Calu3 (cell line): ENCODE measurements at regions of chr1 and their contacts with region 1.

Region 1: GRCh38 chr1:113488576-113489177 is 98.4 kb downstream of the MAGI3 start:
- DNase-seq: peak; percentile 0
- H3K4me3 Mint-ChIP-seq: no peak overlapping the region
- H3K27ac Mint-ChIP-seq: no peak overlapping the region
- H3K4me1 Mint-ChIP-seq: no peaks in the 10 kb centered on the region
- H3K27me3 Mint-ChIP-seq: no peaks in the 10 kb centered on the region
- CTCF ChIP-seq: peak; percentile 14

Region 2: DNA sequence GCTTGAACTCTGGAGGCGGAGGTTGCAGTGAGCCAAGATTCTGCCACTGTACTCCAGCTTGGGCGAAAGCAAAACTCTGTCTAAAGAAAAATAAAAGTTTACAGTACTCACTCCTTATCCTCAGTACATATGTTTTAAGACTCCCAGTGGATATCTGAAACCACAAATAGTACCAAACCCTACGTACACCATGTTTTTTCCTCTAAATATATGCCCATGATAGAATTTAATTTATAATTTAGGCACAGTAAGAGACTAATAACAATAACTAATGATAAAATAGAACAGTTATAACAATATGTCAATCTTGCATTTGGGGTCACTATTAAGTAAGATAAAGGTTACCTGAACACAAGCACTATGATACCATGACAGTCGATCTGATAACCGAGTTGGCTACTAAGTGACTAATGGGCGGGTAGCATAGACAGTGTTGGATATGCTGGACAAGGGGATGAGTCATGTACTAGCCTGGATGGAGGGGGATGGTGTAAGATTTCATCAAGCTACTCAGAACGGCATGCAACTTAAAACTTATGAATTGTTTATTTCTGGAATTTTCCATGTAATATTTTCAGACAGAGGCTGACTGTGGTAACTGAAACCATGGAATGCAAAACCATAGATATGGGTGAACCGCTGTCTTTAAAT is 913.4 kb before region 1 on chr1:
- CTCF ChIA-PET with region 1: no interaction called
- intact Hi-C with region 1: no loop called
- DNase-seq: no peak
- H3K4me3 Mint-ChIP-seq: no peak overlapping the region
- H3K27ac Mint-ChIP-seq: no peak overlapping the region
- H3K4me1 Mint-ChIP-seq: no peaks in the 10 kb centered on the region
- H3K27me3 Mint-ChIP-seq: no peaks in the 10 kb centered on the region
- CTCF ChIP-seq: no peak

Region 3: GRCh38 chr1:113511269-113511668 is 22.6 kb after region 1 on chr1:
- CTCF ChIA-PET with region 1: no interaction called
- intact Hi-C with region 1: loop called (anchors 1 kb)
- DNase-seq: no peak
- H3K4me3 Mint-ChIP-seq: no peak overlapping the region
- H3K27ac Mint-ChIP-seq: no peak overlapping the region
- H3K4me1 Mint-ChIP-seq: peaks cover 24% of the 10 kb centered on the region
- H3K27me3 Mint-ChIP-seq: no peaks in the 10 kb centered on the region
- CTCF ChIP-seq: no peak

Region 4: GRCh38 chr1:113557177-113557576 is 68.5 kb after region 1 on chr1:
- CTCF ChIA-PET with region 1: no interaction called
- intact Hi-C with region 1: no loop called
- DNase-seq: no peak
- H3K4me3 Mint-ChIP-seq: no peak overlapping the region
- H3K27ac Mint-ChIP-seq: no peak overlapping the region
- H3K4me1 Mint-ChIP-seq: peaks cover under 1% of the 10 kb centered on the region
- H3K27me3 Mint-ChIP-seq: no peaks in the 10 kb centered on the region
- CTCF ChIP-seq: no peak

Region 5: DNA sequence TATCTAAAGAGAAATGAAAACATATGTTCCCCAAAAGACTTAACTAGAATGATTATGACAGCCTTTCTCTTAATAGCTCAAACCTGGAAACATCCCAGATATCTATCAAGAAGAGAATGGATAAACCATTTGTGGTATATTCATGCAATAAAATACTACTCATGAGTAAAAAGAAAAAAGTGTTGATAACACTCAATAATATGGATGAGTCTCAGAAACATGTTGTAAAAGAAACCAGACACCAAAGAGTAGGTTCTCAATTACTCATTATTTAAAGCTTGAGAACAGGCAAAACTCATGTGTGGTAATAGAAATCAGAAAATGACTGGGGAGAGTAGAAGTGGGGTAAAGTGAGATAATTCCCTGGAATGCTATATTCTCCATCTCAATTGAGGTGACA is 116.5 kb after region 1 on chr1:
- CTCF ChIA-PET with region 1: no interaction called
- intact Hi-C with region 1: no loop called
- DNase-seq: no peak
- H3K4me3 Mint-ChIP-seq: no peak overlapping the region
- H3K27ac Mint-ChIP-seq: no peak overlapping the region
- H3K4me1 Mint-ChIP-seq: no peaks in the 10 kb centered on the region
- H3K27me3 Mint-ChIP-seq: no peaks in the 10 kb centered on the region
- CTCF ChIP-seq: no peak

Region 6: DNA sequence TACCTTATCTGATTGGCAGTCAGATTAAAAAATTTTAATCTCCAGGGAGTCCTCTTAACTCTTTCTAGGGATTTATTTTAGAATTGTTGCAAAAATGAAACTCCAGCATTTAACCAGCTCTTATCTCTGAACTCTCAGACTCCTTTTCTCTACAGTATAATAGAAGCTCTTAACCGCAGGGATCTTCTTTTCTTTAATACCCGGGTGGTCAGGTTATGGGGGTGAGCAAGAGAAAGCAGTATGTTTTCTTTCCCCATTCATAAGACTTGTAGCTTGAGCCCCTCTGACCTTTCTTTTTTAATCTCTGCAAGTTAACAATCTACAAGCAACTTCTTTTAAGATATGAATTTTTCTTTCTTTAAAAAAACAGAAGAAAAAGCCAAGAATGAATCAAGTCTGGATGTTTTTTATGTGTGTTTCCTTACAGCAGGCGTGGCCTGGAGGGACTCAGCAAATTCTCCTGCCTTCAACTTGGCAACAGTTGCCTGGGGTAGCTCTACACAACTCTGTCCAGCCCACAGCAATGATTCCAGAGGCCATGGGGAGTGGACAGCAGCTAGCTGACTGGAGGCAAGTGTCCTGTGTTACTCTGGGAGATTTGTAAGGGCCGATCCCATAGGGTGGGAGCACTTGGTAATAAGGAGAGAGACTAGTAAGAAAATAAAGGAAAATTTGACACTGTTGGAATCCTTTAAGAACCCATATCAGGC is 477.2 kb after region 1 on chr1:
- CTCF ChIA-PET with region 1: no interaction called
- intact Hi-C with region 1: no loop called
- DNase-seq: no peak
- H3K4me3 Mint-ChIP-seq: no peak overlapping the region
- H3K27ac Mint-ChIP-seq: no peak overlapping the region
- H3K4me1 Mint-ChIP-seq: no peaks in the 10 kb centered on the region
- H3K27me3 Mint-ChIP-seq: no peaks in the 10 kb centered on the region
- CTCF ChIP-seq: no peak